Right cardiac atrium (tissue), 5 donors: ENCODE measurements at regions of chr11 and their contacts with region 1.

Region 1: GRCh38 chr11:8070417-8071115 is 10.4 kb upstream of the TUB start:
- DNase-seq: no peak
- ATAC-seq: peak; percentile 34 to 39
- H3K4me3 ChIP-seq: no peak overlapping the region
- H3K27ac ChIP-seq: no peak overlapping the region
- H3K4me1 ChIP-seq: peaks cover 16% of the 10 kb centered on the region
- H3K27me3 ChIP-seq: no peaks in the 10 kb centered on the region

Region 2: DNA sequence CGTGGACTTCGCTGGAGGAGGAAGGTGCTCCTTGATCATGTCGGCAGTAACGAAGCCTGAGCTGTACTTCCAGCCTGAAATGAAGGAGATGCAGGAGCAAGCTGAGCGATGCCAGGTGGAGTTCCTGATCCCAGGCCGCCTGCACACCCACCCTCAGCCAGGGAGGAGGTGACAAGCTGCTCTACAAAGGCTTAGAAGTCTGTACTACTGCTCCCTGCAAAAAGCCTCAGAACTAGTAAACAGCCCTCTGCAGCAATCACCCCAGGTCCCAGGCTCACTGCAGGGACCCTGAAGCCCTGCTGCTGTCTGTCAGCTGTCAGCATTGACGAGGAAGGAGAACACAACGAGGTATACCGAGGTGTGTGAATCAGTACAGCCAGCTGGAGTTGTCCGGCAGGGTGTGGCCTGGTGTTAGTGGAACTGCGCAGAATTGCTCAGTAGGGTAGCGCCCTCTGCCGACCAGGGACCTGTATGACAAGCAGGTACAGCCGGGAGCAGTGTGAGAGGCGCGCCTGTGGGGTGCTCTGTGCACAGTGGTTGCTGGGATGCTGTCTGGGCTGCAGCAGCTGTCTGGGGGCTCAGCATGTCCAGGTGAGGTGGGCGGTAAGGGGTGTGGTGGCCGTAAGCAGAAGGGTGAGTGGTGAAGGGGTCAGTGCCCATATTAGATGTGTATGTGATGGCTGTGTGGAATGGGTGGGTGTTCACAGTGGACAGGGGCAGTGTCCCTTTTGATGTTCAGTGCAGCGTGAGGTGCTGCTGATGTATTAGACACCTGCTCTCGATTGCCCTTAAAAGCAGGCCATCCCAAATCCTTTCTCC is 404.9 kb before region 1 on chr11:
- intact Hi-C with region 1: no loop called
- DNase-seq: peak; percentile 75 to 86 (median 85)
- ATAC-seq: peak; percentile 90 to 95
- H3K4me3 ChIP-seq: no peak overlapping the region
- H3K27ac ChIP-seq: no peak overlapping the region
- H3K4me1 ChIP-seq: no peaks in the 10 kb centered on the region
- H3K27me3 ChIP-seq: no peaks in the 10 kb centered on the region

Region 3: GRCh38 chr11:8033305-8034105 is 37.1 kb before region 1 on chr11:
- intact Hi-C with region 1: loop called in 3 of 4 experiments (anchors 2 to 5 kb)
- DNase-seq: peak; percentile 87 to 94 (median 89)
- ATAC-seq: peak; percentile 62 to 67
- H3K4me3 ChIP-seq: no peak overlapping the region
- H3K27ac ChIP-seq: no peak overlapping the region
- H3K4me1 ChIP-seq: peaks cover 8% of the 10 kb centered on the region
- H3K27me3 ChIP-seq: no peaks in the 10 kb centered on the region